Activated CD4-positive, alpha-beta T cell treated with anti-CD3 and anti-CD28 coated beads, Interleukin-2, amount 10 ng/mL, durations not matched to agents 24 days and 14 days (primary cell): ENCODE measurements at regions of chrX and their contacts with region 1.

Region 1: GRCh38 chrX:118603981-118604380 is 108.4 kb downstream of the DOCK11 start:
- DNase-seq: peak; percentile 66
- H3K4me3 Mint-ChIP-seq: no peak overlapping the region
- H3K27ac Mint-ChIP-seq: peak overlapping the region; percentile 80
- H3K4me1 Mint-ChIP-seq: peaks cover 10% of the 10 kb centered on the region
- H3K27me3 Mint-ChIP-seq: no peaks in the 10 kb centered on the region

Region 2: GRCh38 chrX:117713411-117713810 is 890.6 kb before region 1 on chrX:
- intact Hi-C with region 1: no loop called
- DNase-seq: no peak
- H3K4me3 Mint-ChIP-seq: no peak overlapping the region
- H3K27ac Mint-ChIP-seq: no peak overlapping the region
- H3K4me1 Mint-ChIP-seq: no peaks in the 10 kb centered on the region
- H3K27me3 Mint-ChIP-seq: no peaks in the 10 kb centered on the region

Region 3: DNA sequence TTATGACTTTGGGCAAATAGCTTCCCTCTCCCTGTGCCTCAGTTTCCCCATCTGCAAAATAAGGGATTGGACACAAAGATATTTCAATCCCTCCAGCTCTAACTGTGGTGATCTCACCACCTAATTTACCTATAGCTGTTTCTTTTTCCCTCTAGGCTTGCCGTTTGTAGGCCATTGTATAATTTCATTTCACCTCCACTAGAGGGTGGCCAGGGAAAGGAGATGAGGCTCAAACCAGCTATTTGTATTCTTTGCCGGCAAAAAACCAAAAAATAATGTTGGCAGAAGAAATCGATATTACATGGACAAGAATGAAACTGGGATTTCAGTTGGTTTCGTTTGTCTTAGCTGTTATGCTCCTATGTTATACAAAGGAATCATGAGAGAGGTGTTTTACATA is 144.5 kb before region 1 on chrX:
- intact Hi-C with region 1: loop called (anchors 1 kb)
- DNase-seq: peak; percentile 66
- H3K4me3 Mint-ChIP-seq: no peak overlapping the region
- H3K27ac Mint-ChIP-seq: no peak overlapping the region
- H3K4me1 Mint-ChIP-seq: peaks cover 1% of the 10 kb centered on the region
- H3K27me3 Mint-ChIP-seq: peaks cover 2% of the 10 kb centered on the region

Region 4: GRCh38 chrX:118724775-118725174 is 120.8 kb after region 1 on chrX:
- intact Hi-C with region 1: no loop called
- DNase-seq: no peak
- H3K4me3 Mint-ChIP-seq: no peak overlapping the region
- H3K27ac Mint-ChIP-seq: no peak overlapping the region
- H3K4me1 Mint-ChIP-seq: peaks cover 2% of the 10 kb centered on the region
- H3K27me3 Mint-ChIP-seq: peaks cover 25% of the 10 kb centered on the region

Region 5: GRCh38 chrX:118807151-118808017 is 203.4 kb after region 1 on chrX:
- intact Hi-C with region 1: loop called (anchors 1 kb)
- DNase-seq: peak; percentile 70
- H3K4me3 Mint-ChIP-seq: no peak overlapping the region
- H3K27ac Mint-ChIP-seq: no peak overlapping the region
- H3K4me1 Mint-ChIP-seq: no peaks in the 10 kb centered on the region
- H3K27me3 Mint-ChIP-seq: peaks cover 11% of the 10 kb centered on the region